ENCODE measurements at regions of chr7 and their contacts with region 1.

Region 1: GRCh38 chr7:89328777-89329176 is 533.2 kb upstream of the TEX47 start:
- DNase-seq: no peak
- ATAC-seq: no peak
- H3K4me3 ChIP-seq: no peak overlapping the region
- H3K4me1 ChIP-seq: no peaks in the 10 kb centered on the region
- CTCF ChIP-seq: no peak

Region 2: GRCh38 chr7:88851220-88851619 is 477.6 kb before region 1 on chr7:
- intact Hi-C with region 1: loop called in 1 of 2 experiments (anchors 10 kb)
- DNase-seq: no peak
- ATAC-seq: no peak
- H3K4me3 ChIP-seq: no peak overlapping the region
- H3K4me1 ChIP-seq: no peaks in the 10 kb centered on the region
- CTCF ChIP-seq: no peak

Measured in mucosa of descending colon (tissue), 3 donors.